ENCODE measurements at regions of chr1 and their contacts with region 1.

Region 1: DNA sequence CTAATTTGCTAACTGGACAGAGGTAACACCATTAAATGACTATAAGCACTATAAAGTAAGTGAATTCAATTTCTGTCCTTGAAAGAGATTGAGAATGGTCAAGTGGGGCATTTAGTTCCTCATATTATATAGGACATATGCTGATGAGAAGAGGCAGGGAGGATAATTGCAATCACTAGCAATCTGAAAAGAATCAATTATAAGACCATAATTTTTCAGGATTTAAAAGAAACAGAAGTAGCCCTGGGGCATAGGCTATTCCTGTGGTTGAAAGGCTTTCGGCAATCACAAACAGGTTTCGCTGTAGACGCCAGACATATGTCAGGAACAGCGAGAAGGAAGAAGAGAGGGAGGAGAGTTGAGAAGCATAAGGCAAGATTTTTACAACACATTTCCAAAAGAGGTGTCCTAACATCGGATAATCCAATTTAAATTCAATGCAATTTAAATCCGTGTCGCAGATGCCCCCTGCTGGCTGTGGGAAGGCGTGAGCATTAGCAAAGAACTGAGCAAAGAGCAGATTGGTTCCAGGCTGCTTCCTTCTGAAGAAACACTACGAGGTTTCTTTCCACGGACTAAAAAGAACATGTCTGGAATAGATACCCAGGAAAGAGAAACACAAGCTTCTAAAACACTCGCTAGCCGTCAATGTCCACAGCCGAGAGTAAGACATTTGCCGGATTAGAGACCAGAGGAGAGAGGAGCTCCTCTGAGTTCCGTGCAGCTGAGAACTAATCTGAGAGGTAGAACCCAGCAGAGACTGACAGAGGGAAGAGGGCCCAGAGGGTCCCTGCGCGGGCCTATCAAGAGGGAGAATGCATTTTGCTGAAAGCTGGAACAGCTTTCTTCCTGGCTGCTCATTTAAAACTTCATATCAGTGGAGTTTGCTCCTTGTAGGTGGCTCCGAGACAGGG is 27.9 kb downstream of the RGS5 start:
- DNase-seq: peak; percentile 75
- ATAC-seq: peak; percentile 75 to 78

Region 2: GRCh38 chr1:162854245-162854882 is 320.4 kb before region 1 on chr1:
- intact Hi-C with region 1: loop called in 1 of 2 experiments (anchors 5 kb)
- DNase-seq: peak; percentile 58
- ATAC-seq: peak in 1 of 2 donors; percentile 66

Region 3: DNA sequence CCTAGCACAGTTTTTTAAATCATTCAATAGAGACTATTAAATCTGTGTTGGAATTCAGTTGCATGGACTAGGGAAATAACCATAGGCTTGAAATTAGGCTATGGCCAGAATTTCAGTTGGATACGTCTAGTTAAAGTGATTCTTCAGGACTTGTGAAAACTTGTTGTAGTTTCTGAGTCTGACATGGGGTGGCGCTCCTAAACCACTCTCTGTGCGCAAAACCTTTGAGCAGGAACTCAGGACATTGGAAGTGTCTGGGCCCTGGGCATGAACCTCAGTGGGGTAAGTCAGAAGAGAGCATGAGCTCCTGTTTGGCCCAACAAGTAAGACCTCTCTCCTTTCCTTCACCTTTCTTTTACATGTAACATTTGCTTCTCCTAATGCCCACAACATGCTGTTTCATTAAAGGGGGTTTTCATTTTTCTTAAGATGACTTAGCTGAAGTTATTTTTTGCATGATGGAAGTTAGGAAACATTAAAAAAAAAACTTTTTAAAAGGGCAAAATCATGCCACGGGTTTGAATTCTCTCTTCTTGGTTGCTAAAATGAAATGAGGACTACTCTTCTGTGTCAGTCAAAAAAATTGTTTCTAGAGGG is 296.7 kb before region 1 on chr1:
- intact Hi-C with region 1: loop called (anchors 2 to 5 kb)
- DNase-seq: peak; percentile 53
- ATAC-seq: peak; percentile 77 to 84

Region 4: DNA sequence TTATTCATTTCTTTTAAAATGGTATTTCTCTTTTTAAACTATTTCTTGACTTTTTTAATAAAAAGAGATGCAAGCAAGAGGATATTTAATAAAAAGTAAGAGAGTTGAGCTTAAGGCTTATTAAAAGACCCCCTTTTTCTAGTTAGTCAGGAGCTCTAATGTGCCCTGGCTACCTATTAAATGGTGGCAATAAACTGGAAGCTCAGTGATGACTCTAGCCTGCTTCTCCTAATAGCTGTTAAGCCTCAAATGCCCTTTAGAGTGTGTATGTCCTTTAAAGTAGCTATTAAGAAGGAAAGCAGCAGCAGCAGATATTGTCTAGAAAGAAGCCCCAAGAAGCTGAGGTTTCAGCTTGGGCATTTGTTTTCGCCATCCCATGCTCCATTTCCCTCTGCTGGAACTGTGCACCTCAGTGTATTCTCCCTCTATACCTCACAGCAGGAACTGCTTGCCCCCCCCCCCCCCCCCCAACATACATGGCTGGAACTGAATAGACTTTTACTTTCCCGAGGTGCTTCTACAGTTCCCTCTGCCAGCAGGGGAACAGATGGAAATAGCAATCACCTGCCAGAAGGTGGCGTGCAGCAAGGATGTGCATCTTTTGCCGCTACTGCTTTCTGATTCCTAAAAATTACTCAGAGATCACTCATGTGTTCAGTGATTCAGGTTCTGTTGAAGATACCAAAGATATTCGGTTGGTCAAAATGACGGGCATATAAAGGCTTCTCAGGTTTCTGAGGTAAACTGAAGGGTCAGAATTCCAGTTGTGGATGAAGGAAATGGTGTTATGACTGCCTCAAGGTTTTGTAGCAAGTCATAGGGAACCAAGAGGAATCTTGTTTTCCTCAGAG is 103.2 kb before region 1 on chr1:
- intact Hi-C with region 1: loop called (anchors 2 to 10 kb)
- DNase-seq: peak; percentile 69
- ATAC-seq: peak; percentile 38 to 55

Region 5: DNA sequence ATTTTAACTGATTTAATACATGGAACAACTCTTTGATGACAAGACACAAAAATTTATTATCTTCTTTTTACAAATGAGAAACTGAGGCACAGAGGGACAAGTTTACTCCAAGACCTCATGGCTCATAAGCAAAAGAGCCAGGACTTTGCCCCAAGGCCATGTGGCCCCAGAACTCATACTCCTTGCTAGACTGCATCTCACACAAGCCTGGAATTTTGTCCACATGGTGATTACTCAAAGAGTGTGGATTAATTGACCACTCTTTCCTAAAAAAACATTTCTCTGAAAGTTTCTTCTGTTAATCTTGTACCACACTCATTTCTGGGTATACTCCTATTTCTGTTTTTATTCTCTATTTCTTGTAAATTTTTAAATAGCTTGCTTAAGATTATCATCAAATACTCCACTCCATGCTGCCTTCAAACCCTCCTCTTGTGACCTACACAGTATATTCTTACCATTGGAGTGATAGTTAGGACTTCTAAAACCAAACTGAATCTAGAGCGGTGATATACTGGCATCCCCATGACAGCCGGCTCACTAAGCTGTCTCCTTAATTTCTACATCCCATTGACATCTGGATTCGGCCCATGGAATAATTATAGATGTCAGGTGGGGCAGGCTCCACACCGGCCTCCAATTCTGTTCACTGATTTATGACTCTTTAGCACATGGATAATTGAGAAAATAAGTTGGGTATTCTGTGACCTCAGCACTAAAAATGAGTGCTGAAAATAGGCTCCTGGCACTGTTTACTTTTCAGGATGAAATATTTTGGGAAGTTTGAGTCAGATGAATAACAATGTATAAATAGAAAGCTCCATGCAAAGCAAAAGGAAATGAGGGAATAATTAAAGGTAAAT is 89.5 kb before region 1 on chr1:
- intact Hi-C with region 1: no loop called
- DNase-seq: no peak
- ATAC-seq: no peak

Region 6: DNA sequence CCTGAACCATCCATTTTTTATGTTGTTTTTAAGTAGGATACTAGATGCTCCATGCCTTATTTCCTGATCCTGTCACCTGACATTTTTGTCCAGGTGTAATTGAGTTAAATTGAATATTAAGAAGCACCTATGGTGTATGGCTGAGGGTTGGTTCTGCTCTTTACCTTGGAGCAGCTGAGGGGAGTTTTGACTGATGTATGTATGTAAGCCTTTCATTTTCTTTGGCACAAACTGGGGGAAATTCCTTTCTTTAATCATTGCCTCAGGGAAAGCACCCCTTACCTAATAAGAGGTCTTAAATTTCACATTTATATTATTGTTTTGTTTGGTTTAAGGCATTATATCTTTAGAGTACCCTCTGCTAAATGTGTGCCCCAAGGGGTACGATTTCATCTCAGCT is 89.0 kb after region 1 on chr1:
- intact Hi-C with region 1: no loop called
- DNase-seq: no peak
- ATAC-seq: no peak